GM12878 (cell line): ENCODE measurements at regions of chr7 and their contacts with region 1.

Region 1: DNA sequence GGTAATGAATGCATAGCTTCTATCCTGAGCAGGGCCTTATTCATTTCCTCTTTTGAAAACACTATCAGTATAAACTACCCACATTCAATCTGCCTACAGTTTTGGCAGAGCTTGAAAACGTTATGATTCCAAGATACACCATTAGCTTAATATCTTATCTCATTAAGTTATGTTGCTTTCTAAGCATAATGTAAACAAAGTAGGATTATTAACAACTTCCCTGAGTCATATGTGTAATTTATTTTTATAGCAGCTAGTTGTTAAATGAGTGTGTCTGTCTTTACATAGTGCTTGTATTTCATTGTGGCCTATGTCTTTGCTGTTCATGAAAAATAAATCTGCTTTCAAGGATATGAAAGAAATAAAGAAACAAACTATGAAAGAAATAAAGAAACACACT is 106.2 kb upstream of the DLX6 start:
- DNase-seq: no peak
- ATAC-seq: no peak
- H3K4me3 ChIP-seq: no peak overlapping the region
- H3K27ac ChIP-seq: no peak overlapping the region
- H3K4me1 ChIP-seq: no peaks in the 10 kb centered on the region
- H3K27me3 ChIP-seq: no peaks in the 10 kb centered on the region
- CTCF ChIP-seq: no peak
- EP300 ChIP-seq: no peak
- POLR2A ChIP-seq: no peak
- RAD21 ChIP-seq: no peak

Region 2: GRCh38 chr7:96414931-96415292 is 484.2 kb before region 1 on chr7:
- CTCF ChIA-PET with region 1: no interaction called
- POLR2A ChIA-PET with region 1: no interaction called
- RAD21 ChIA-PET with region 1: no interaction called
- SMC1A ChIA-PET with region 1: no interaction called
- in situ Hi-C with region 1: no loop called
- intact Hi-C with region 1: loop called (anchors 10 kb)
- DNase-seq: peak; percentile 7
- ATAC-seq: peak; percentile 93
- H3K4me3 ChIP-seq: no peak overlapping the region
- H3K27ac ChIP-seq: no peak overlapping the region
- H3K4me1 ChIP-seq: no peaks in the 10 kb centered on the region
- H3K27me3 ChIP-seq: no peaks in the 10 kb centered on the region; a peak in 1 of 4 replicates
- CTCF ChIP-seq: peak; percentile 71 to 88 (median 84)
- EP300 ChIP-seq: no peak
- POLR2A ChIP-seq: no peak
- RAD21 ChIP-seq: peak; percentile 88

Region 3: DNA sequence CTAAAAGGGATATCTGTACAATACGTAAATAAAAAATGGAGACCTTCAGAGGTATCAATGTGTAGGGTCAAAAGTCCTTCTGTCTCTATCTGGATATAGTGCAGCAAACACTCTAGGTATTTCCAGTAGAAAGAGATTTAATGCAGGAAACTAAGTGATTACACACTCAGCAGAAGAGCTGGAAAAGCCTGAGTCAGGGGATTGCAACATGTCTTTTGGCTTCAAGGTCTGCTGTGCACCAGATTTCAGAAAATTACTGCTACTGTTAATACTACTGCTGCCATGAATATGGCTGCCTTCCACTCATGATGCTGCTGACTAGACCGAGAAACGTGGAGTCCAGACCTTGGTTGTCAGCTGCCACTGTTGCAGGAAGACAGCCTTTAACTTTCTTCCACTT is 11.4 kb after region 1 on chr7:
- CTCF ChIA-PET with region 1: no interaction called
- POLR2A ChIA-PET with region 1: no interaction called
- RAD21 ChIA-PET with region 1: no interaction called
- SMC1A ChIA-PET with region 1: no interaction called
- in situ Hi-C with region 1: no loop called
- intact Hi-C with region 1: no loop called
- DNase-seq: no peak
- ATAC-seq: no peak
- H3K4me3 ChIP-seq: no peak overlapping the region
- H3K27ac ChIP-seq: no peak overlapping the region
- H3K4me1 ChIP-seq: no peaks in the 10 kb centered on the region
- H3K27me3 ChIP-seq: no peaks in the 10 kb centered on the region
- CTCF ChIP-seq: no peak
- EP300 ChIP-seq: no peak
- POLR2A ChIP-seq: no peak
- RAD21 ChIP-seq: no peak